Activated CD8-positive, alpha-beta T cell treated with anti-CD3 and anti-CD28 coated beads, Interleukin-2, amount 10 ng/mL, durations not matched to agents 7 days and 5 days (primary cell): ENCODE measurements at regions of chr3 and their contacts with region 1.

Region 1: DNA sequence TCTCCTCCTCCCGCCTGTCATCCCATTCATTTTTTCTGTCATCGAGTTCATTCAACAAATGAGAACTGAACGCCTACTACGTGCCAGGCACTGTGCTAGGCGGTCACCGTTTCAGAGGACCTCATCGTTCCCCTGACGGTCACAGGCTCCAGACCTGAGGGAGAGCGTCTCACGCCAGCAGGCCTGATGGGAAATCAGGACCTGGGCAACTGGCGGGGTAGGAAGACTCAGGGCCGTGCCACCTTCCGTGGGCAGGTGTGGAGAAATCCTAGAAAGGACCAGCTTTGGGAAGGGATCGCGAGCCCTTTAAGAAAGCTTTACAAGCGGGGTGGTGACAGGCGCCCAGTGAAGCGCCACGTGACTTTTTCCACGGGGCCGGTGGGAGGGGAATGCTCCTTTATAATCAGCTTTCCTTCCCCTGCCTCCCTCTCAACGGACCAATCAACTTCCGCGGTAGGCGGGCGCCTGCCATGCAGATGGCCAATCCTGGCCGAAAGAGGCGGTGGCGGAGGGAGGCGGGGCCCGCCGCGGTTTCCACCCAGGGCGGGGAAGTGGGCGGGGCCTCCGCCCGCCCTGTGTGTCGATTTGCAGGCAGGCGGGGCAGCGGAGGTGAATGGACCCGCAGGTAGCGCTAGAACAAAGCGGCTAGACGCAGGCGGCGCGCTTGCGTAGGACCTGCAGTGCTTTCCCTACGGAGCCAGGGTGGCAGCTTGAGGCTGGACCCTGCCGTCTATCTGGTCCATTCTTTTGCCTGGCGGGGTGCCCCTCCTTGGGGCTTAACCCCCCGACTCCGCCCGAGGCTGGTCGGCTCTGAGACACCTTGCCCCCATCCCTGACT is 816 bp upstream of the DUSP7 start:
- DNase-seq: peak; percentile 100
- ATAC-seq: peak; percentile 84
- H3K4me3 Mint-ChIP-seq: peak overlapping the region; percentile 85
- H3K27ac Mint-ChIP-seq: peak overlapping the region; percentile 95
- H3K4me1 Mint-ChIP-seq: peaks cover 34% of the 10 kb centered on the region
- H3K27me3 Mint-ChIP-seq: no peaks in the 10 kb centered on the region

Region 2: GRCh38 chr3:51982782-51983577 is 74.2 kb before region 1 on chr3 and contains the start of gene ACY1:
- CTCF ChIA-PET with region 1: interaction called, 14 read pairs
- POLR2A ChIA-PET with region 1: interaction called, 3 read pairs
- DNase-seq: peak; percentile 78
- ATAC-seq: peak; percentile 85
- H3K4me3 Mint-ChIP-seq: peak within 1 kb of the TSS; percentile 96
- H3K27ac Mint-ChIP-seq: peak within 1 kb of the TSS; percentile 93
- H3K4me1 Mint-ChIP-seq: peaks cover 28% of the 10 kb centered on the region
- H3K27me3 Mint-ChIP-seq: no peaks in the 10 kb centered on the region
- total RNA-seq, gene ACY1: 17.4 to 21.2 TPM

Region 3: GRCh38 chr3:52001443-52001974 is 55.7 kb before region 1 on chr3:
- CTCF ChIA-PET with region 1: interaction called, 38 read pairs
- POLR2A ChIA-PET with region 1: no interaction called
- DNase-seq: peak; percentile 92
- ATAC-seq: peak; percentile 98
- H3K4me3 Mint-ChIP-seq: no peak overlapping the region
- H3K27ac Mint-ChIP-seq: no peak overlapping the region
- H3K4me1 Mint-ChIP-seq: peaks cover 24% of the 10 kb centered on the region
- H3K27me3 Mint-ChIP-seq: peaks cover 10% of the 10 kb centered on the region

Region 4: GRCh38 chr3:52123106-52123725 is 66.0 kb after region 1 on chr3:
- CTCF ChIA-PET with region 1: interaction called, 56 read pairs
- POLR2A ChIA-PET with region 1: no interaction called
- DNase-seq: peak; percentile 79
- ATAC-seq: peak; percentile 80
- H3K4me3 Mint-ChIP-seq: no peak overlapping the region
- H3K27ac Mint-ChIP-seq: no peak overlapping the region
- H3K4me1 Mint-ChIP-seq: peaks cover 32% of the 10 kb centered on the region
- H3K27me3 Mint-ChIP-seq: no peaks in the 10 kb centered on the region

Region 5: DNA sequence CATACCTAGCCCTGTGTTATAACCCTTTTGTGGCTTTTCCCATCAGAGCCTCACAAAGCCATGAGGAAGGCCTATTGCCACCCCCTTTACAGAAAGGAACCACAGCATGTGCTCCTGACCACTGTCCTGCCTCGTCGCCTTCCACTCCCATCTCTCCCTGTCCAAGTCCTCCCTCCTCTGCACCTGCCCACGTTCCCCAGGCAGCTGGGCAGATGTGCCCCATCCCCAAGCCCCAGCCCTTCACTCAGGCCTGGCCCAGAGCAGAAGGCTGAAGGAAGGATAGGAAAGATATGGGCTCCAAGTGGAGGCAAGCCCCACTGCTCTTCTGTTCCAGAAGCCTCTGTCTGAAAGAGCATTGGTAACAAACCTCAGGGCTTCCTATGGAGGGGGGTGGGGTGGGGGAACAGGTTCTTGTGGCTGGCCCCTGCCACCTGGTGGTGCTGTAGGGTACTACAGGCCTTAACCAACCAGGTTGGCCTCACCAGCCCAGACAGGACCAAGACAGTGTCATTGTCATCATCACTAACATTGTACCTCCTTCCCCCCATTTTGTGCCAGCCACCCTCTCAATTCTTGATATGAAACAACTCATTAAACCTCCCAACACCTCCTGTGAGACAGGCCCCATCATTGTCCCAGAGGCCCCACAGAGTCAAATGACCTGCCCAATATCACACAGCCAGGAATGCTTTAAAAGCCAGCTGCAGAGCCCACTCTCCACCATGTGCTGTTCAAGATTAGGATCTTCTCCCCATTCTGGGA is 87.0 kb after region 1 on chr3:
- CTCF ChIA-PET with region 1: interaction called, 11 read pairs
- POLR2A ChIA-PET with region 1: no interaction called
- DNase-seq: peak; percentile 92
- ATAC-seq: peak; percentile 92
- H3K4me3 Mint-ChIP-seq: no peak overlapping the region
- H3K27ac Mint-ChIP-seq: peak overlapping the region; percentile 82
- H3K4me1 Mint-ChIP-seq: peaks cover 14% of the 10 kb centered on the region
- H3K27me3 Mint-ChIP-seq: no peaks in the 10 kb centered on the region

Region 6: GRCh38 chr3:52154117-52155094 is 97.2 kb after region 1 on chr3 and contains the start of gene POC1A:
- CTCF ChIA-PET with region 1: interaction called, 9 read pairs
- POLR2A ChIA-PET with region 1: interaction called, 11 read pairs
- DNase-seq: peak; percentile 93
- ATAC-seq: peak; percentile 90
- H3K4me3 Mint-ChIP-seq: peak within 1 kb of the TSS; percentile 88
- H3K27ac Mint-ChIP-seq: peak within 1 kb of the TSS; percentile 96
- H3K4me1 Mint-ChIP-seq: peaks cover 28% of the 10 kb centered on the region
- H3K27me3 Mint-ChIP-seq: no peaks in the 10 kb centered on the region
- total RNA-seq, gene POC1A: 31.7 to 32.3 TPM